Activated CD4-positive, alpha-beta T cell treated with anti-CD3 and anti-CD28 coated beads for 36 hours (primary cell): ENCODE measurements at regions of chr10 and their contacts with region 1.

Region 1: DNA sequence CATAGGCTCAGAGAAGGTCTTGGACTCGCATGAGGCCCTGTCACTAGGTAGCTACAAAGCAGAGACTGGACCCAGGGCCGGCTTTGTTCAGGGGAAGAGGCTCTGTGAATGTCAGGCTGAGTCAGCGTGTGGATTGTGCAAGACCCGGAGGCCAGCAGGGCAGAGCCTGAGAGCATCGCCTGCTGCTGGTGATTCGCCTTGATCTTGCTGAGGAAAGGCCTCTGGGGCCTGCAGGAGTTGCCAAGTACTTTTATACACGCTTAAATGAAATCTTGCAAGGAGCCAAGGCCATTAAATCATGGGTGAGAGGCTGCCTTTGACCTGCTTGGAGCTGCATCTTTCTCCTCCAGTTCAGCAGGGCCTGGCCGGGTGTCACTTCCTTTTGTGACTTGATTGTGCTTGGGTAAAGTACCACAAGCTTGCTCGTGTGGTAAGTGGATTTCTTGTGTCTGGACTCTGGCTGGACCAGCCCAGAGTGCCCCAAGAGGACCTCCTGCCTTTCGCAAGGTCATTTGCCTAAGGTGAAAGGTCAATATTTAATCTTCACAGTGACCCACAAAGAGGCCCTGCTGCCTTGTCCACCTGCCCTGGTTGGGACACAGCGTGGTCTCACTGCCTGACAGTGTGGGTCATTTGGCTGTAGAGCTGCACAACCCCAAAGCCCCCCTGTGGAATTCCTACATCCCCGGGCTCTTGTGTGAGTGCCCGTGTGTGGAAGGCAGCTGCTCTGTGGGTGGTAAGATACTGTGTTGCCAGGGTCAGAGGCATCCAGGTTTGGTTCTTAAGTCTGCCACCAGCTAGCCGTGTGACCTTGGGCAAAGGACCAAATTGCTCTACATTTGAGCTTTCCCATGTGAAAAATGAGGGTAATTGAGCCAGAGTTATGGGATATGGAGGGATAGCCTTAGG is 38.6 kb upstream of the SH2D4B start:
- DNase-seq: peak; percentile 88
- ATAC-seq: peak; percentile 85
- H3K4me3 Mint-ChIP-seq: peak overlapping the region; percentile 23
- H3K27ac Mint-ChIP-seq: peak overlapping the region; percentile 98
- H3K4me1 Mint-ChIP-seq: peaks cover 100% of the 10 kb centered on the region
- H3K27me3 Mint-ChIP-seq: no peaks in the 10 kb centered on the region

Region 2: DNA sequence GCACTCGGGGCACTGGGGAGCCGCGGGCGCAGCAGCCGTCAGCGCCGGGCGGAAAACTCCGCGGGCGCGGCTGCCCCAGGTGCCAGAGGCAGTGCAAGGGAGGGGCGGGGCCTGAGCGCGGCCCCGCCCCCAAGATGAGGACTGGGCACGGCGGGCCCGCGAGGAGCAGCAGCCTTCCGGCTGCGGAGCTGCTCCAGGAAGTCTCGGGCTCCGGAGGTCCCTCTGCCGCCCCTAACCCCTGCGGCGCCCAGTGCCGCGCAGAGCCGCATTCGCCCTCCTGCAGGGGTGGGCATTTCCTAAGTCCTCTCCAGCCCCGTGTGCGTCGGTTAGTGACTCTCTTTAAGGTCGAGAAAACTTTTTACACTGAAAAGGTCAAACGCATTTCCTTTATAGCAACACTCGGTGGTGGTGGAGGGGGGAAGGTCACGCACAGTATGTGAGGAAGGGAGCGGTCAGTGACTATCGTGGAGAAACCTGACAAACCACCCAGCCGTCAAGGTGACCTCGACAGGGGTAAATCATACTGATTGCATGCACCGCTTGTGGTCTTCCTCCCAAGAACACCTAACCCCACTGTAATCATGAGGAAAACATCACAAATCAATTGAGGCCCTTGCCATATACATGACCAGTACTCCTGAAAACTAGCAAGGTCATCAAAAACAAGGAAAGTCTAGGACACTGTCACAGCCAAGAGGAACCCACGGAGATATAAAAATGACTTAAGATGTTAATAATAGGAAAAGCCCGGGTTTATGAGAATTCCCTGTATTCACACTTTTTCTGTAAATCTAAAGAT is 293.4 kb before region 1 on chr10 and contains the start of gene ANXA11:
- CTCF ChIA-PET with region 1: no interaction called
- POLR2A ChIA-PET with region 1: no interaction called
- intact Hi-C with region 1: no loop called
- DNase-seq: peak; percentile 92
- ATAC-seq: peak; percentile 63
- H3K4me3 Mint-ChIP-seq: peak within 1 kb of the TSS; percentile 86
- H3K27ac Mint-ChIP-seq: peak within 1 kb of the TSS; percentile 95
- H3K4me1 Mint-ChIP-seq: peaks cover 43% of the 10 kb centered on the region
- H3K27me3 Mint-ChIP-seq: no peaks in the 10 kb centered on the region
- total RNA-seq, gene ANXA11: 256 to 348 TPM

Region 3: DNA sequence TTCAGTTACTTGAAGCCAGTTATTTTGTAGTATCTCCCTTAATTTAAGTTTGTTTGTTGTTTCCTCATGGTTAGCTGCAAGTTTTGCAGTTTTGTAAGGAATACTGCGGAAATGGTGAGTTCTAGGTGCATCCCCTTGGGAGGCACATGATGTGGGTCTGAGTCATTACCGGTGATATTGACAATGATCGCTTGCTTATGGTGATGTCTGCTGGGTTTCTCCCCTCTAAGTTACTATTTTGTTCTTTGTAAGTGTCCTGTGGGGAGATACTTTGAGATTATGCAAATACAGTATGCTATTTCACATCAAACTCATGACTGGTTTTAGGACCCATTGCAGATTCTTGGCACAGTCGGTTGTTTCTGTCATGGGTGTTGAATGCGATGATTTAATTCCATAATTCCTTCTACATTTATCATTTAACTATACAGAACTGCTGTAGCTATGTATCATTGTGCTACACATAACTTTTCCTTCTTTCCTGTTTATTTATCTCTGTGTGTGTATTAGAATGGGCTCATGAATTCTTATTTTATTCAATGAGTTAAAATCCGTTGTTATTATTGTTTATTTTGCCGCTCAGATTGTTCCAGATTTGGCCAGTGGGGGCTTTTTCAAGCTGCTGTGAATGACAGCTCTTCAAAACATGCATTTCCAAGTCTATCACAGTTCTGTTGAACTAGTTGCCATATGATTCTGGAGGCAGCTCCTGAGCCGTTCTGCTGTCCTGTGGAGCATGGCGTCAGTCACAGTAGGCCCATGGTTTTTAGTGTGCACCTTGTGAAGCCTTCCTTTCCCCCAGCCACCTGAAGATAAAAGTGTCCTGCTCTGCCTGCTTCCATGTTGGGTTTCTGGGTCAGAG is 26.6 kb before region 1 on chr10:
- CTCF ChIA-PET with region 1: interaction called, 372 read pairs
- POLR2A ChIA-PET with region 1: interaction called, 5 read pairs
- intact Hi-C with region 1: loop called (anchors 1 to 2 kb)
- DNase-seq: peak; percentile 66
- ATAC-seq: peak; percentile 80
- H3K4me3 Mint-ChIP-seq: peak overlapping the region; percentile 61
- H3K27ac Mint-ChIP-seq: peak overlapping the region; percentile 91
- H3K4me1 Mint-ChIP-seq: peaks cover 93% of the 10 kb centered on the region
- H3K27me3 Mint-ChIP-seq: no peaks in the 10 kb centered on the region